CD4-positive, alpha-beta T cell (primary cell): ENCODE measurements at regions of chr11 and their contacts with region 1.

Region 1: DNA sequence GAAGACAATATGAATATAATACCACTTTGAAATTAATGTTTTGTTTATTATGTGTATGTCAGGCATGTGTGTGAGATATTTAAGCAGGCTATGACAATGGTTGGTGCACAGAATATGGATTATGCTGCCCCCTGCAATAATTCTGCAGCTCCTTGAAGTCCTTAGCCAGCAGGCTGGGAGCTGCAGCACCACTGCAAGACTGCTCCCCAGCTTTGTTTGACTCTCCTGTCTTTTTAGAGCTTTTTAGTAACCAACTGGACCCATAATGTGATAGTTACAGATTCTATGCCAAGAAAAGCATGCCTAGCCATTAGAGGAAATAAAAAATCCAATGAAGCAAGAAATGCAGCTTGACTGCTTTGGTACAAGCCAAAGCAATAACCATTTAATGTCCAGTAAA is 535.1 kb downstream of the TMEM135 start:
- DNase-seq: no peak
- ATAC-seq: no peak
- H3K4me3 ChIP-seq: no peak overlapping the region
- H3K4me3 Mint-ChIP-seq: no peak overlapping the region
- H3K27ac ChIP-seq: no peak overlapping the region
- H3K27ac Mint-ChIP-seq: no peak overlapping the region
- H3K4me1 ChIP-seq: no peaks in the 10 kb centered on the region
- H3K4me1 Mint-ChIP-seq: no peaks in the 10 kb centered on the region
- H3K27me3 ChIP-seq: no peaks in the 10 kb centered on the region
- H3K27me3 Mint-ChIP-seq: no peaks in the 10 kb centered on the region
- CTCF ChIP-seq: no peak

Region 2: GRCh38 chr11:87628026-87628580 is 55.2 kb after region 1 on chr11:
- CTCF ChIA-PET with region 1: no interaction called
- POLR2A ChIA-PET with region 1: no interaction called
- intact Hi-C with region 1: loop called in 1 of 2 experiments (anchors 5 kb)
- DNase-seq: no peak
- ATAC-seq: no peak
- H3K4me3 ChIP-seq: no peak overlapping the region
- H3K4me3 Mint-ChIP-seq: no peak overlapping the region
- H3K27ac ChIP-seq: no peak overlapping the region
- H3K27ac Mint-ChIP-seq: no peak overlapping the region
- H3K4me1 ChIP-seq: no peaks in the 10 kb centered on the region
- H3K4me1 Mint-ChIP-seq: no peaks in the 10 kb centered on the region
- H3K27me3 ChIP-seq: no peaks in the 10 kb centered on the region
- H3K27me3 Mint-ChIP-seq: no peaks in the 10 kb centered on the region
- CTCF ChIP-seq: no peak

Region 3: GRCh38 chr11:87908086-87908485 is 335.2 kb after region 1 on chr11:
- CTCF ChIA-PET with region 1: no interaction called
- POLR2A ChIA-PET with region 1: no interaction called
- intact Hi-C with region 1: loop called in 1 of 2 experiments (anchors 5 kb)
- DNase-seq: no peak
- ATAC-seq: no peak
- H3K4me3 ChIP-seq: no peak overlapping the region
- H3K4me3 Mint-ChIP-seq: no peak overlapping the region
- H3K27ac ChIP-seq: no peak overlapping the region
- H3K27ac Mint-ChIP-seq: no peak overlapping the region
- H3K4me1 ChIP-seq: no peaks in the 10 kb centered on the region
- H3K4me1 Mint-ChIP-seq: no peaks in the 10 kb centered on the region
- H3K27me3 ChIP-seq: no peaks in the 10 kb centered on the region
- H3K27me3 Mint-ChIP-seq: no peaks in the 10 kb centered on the region
- CTCF ChIP-seq: no peak